Vagina (tissue), 2 donors: ENCODE measurements at regions of chr16 and their contacts with region 1.

Region 1: GRCh38 chr16:8878521-8878911 is 3.6 kb upstream of the LITAFD start:
- DNase-seq: no peak
- H3K4me3 ChIP-seq: no peak overlapping the region
- H3K27ac ChIP-seq: no peak overlapping the region
- H3K4me1 ChIP-seq: peaks cover 13% of the 10 kb centered on the region
- H3K27me3 ChIP-seq: no peaks in the 10 kb centered on the region
- CTCF ChIP-seq: no peak
- POLR2A ChIP-seq: no peak

Region 2: DNA sequence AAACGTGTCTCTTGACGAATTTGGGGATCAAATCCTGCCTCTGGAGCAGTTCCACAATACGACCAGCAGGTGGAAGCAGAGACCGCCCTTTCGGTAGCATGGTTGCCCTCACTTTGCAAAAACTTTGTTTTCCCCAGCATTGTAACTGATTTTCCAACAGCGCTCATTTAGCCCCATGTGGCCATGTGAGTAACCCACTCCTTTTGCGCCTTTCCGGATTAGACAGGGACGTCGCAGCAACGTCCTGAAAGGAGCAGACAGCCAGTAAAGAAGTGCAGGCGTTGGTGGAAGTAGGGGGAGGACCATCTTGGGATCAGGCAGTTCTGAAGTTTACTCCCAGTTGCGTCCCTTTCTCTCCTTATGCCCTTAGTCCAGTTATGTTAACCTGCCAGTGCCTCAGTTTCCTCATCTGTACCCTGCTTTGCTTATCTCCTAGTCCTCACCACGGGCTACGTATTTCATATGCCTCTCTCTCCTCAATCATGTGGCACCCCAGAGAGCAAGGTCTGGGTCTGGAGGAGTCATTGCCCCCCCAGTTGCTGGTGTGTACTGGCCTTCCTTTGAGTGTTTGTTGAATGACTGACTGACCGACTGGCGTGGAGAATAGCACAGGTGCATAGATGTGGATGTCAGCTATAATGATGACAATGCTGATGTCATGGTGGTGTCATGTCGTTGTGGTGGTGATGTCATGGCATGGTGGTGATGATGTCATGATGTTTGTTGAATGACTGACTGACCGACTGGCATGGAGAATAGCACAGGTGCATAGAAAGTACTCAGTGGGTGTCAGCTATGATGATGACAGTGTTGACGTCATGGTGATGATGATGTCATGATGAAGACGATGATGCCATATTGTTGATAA is 310.5 kb before region 1 on chr16:
- intact Hi-C with region 1: loop called (anchors 5 kb)
- DNase-seq: no peak
- H3K4me3 ChIP-seq: no peak overlapping the region
- H3K27ac ChIP-seq: no peak overlapping the region
- H3K4me1 ChIP-seq: no peaks in the 10 kb centered on the region
- H3K27me3 ChIP-seq: no peaks in the 10 kb centered on the region
- CTCF ChIP-seq: peak; percentile 95 to 99 (median 97)
- POLR2A ChIP-seq: no peak

Region 3: DNA sequence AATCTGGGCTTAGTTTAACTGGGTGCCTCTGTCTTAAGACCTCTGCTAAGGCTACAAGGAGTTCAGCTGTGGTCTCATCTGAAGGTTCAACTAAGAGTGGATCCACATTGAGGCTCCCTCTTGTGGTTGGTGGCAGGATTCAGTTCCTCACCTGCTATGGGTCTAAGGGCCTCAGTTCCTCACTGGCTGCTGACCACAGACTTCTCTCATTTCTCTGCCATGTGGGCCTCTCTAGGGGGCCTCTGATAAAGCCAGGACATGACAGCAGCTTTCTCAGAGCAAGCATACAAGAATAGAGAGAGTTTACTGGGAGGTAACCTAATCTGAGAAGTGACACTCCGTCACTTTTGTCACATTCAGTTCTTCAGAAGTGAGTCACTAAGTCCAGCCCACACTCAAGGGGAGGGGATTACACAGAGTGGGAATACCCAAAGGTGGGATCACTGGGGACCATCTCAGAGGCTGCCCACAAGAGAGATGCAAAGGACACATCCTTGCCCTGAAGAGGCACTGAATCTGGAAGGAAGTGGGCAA is 223.3 kb before region 1 on chr16:
- intact Hi-C with region 1: loop called (anchors 5 kb)
- DNase-seq: no peak
- H3K4me3 ChIP-seq: no peak overlapping the region
- H3K27ac ChIP-seq: no peak overlapping the region
- H3K4me1 ChIP-seq: no peaks in the 10 kb centered on the region
- H3K27me3 ChIP-seq: no peaks in the 10 kb centered on the region
- CTCF ChIP-seq: no peak
- POLR2A ChIP-seq: no peak

Region 4: GRCh38 chr16:8989099-8989878 is 110.8 kb after region 1 on chr16:
- intact Hi-C with region 1: no loop called
- DNase-seq: no peak
- H3K4me3 ChIP-seq: no peak overlapping the region
- H3K27ac ChIP-seq: no peak overlapping the region
- H3K4me1 ChIP-seq: no peaks in the 10 kb centered on the region
- H3K27me3 ChIP-seq: no peaks in the 10 kb centered on the region
- CTCF ChIP-seq: no peak
- POLR2A ChIP-seq: no peak